GM10248 (cell line): ENCODE measurements at regions of chr5 and their contacts with region 1.

Region 1: GRCh38 chr5:131589510-131590348 is 45.3 kb downstream of the RAPGEF6 start:
- DNase-seq: peak; percentile 55
- CTCF ChIP-seq: peak; percentile 72

Region 2: GRCh38 chr5:131564229-131564652 is 25.5 kb before region 1 on chr5:
- CTCF ChIA-PET with region 1: interaction called, 12 read pairs
- POLR2A ChIA-PET with region 1: no interaction called
- DNase-seq: no peak
- CTCF ChIP-seq: no peak

Region 3: GRCh38 chr5:131628990-131629389 is 39.3 kb after region 1 on chr5:
- CTCF ChIA-PET with region 1: interaction called, 11 read pairs
- POLR2A ChIA-PET with region 1: no interaction called
- DNase-seq: no peak
- CTCF ChIP-seq: no peak

Region 4: DNA sequence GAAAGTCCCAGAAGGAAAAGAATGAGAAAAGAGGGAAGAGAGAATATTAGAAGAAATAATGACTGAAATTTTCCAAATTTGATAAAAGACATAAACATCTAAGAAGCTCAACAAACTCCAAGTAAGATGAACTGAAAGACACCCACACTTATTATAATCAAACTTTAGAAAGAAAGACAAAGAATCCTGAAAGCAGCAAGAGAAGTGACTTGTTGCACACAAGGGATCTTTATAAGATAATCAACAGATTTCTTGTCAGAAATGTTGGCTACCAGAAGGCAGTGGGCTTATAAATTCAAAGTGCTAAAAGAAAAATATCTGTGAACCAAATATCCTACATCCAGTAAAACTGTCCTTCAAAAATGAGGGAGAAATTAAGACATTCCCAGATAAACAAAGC is 256.1 kb after region 1 on chr5:
- CTCF ChIA-PET with region 1: no interaction called
- POLR2A ChIA-PET with region 1: no interaction called
- DNase-seq: no peak
- CTCF ChIP-seq: no peak

Region 5: DNA sequence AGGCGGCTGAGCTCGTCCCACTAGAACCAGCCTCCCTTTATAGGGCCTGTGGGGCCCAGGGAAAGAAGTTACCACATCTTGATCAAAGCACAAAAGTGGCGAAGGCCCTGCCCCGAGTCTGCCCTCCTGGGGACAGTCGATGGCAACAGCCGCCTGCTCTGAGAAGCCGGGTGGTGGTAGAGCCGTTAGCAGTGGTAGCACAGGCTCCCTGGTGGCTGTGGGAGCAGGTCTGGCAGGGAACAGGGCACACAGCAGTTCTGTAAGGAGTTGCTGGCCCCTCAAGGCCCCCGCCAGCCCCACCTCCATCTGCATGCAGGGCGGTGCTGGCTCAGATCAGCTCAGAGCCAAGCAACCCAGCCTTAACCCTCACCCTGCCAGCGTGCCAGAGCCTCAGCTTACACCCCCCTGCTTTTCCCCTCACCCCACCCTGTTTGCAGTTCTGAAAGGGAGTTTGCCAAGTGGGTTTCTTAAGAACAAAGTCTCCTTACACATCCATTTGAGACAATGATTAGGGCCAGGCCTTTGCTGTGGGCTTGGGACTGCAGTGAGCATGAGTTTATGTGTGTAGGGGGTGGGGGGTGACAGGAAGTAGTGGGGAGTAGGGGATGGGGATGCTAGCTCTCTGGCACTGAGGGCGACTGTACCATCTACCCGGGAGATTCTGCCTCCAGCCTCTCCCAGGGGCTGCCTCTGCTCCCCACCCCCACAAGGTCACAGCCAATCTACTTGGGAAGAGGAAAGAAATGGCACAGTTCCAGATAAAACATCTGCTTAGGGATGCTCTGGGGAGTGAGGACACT is 409.9 kb after region 1 on chr5:
- CTCF ChIA-PET with region 1: interaction called, 191 read pairs
- POLR2A ChIA-PET with region 1: no interaction called
- DNase-seq: no peak
- CTCF ChIP-seq: no peak

Region 6: DNA sequence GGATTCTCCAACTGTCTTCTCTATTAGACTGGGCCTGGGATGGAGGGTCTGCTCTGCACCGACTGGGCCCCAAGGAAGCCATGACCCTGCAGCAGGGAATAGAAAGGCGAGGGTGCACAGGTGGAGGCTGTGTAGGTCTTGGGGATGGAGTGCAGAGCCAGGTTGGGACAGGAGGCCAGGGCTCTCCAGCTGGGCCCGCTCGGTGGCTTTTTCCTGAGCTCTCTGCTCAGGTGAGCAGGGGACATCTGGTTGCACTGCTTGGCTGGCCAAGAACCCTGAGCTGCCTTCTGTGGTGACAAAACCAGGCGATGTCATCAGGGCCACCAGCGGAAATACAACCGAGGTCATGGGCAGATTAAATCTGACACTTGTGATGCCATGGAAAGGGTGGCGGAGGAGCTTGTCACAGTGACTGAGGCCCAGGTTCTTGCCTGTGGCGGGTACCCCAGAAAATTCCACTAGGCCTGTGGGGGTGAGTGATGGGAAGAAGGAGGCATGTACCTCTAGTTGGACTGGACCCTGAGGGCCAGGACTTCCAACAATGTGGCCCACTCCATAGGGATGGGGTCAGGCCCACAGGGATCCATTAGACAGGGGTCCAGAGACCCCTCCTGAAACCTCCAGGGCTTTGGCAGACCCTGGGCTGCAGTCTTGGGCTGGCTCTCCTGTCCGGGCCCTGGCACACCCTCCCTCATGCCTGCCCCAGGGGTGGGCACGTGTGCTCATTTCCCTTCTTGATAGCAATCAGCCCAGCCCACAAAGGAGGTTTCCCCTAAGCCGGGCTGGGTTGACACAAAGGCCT is 466.3 kb after region 1 on chr5:
- CTCF ChIA-PET with region 1: interaction called, 12 read pairs
- POLR2A ChIA-PET with region 1: no interaction called
- DNase-seq: peak; percentile 16
- CTCF ChIP-seq: no peak